OCI-LY7 (cell line): ENCODE measurements at regions of chr2 and their contacts with region 1.

Region 1: DNA sequence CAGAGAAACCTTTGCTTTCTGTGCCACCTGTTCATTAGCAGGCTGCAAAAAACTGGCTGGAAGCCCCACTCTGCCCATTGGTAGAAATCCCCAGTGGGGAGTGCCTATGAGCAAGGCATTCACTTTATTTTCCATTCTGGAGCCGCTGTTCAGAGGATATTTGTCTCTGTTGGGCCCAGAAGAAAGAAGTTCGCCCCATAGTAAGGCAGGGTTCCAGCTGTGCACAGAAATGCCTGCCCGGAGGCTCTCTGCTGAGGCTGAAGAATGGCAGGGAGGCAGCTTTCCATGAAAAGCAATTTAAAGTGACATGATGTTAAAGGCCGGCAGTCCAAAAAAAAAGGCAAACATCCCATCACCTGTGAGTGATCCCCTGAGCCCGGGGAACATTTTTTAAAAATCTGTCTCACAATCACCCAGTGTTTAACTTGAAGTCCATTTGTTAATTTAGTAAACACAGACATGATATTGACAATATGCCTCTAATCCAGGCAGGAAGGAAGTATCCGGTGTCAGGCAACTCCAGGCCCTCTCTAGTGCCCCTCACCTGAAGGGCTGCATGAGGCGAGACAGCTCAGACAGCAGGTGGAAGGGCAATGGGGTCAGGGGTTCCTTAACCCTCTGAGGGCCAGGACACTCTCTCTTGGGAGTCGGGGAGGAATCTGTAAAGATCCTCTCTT is 265.1 kb upstream of the SIX2 start:
- DNase-seq: no peak
- H3K4me3 ChIP-seq: no peak overlapping the region
- H3K27ac ChIP-seq: no peak overlapping the region
- H3K4me1 ChIP-seq: peaks cover 4% of the 10 kb centered on the region
- CTCF ChIP-seq: no peak

Region 2: GRCh38 chr2:44456946-44457345 is 817.4 kb before region 1 on chr2:
- CTCF ChIA-PET with region 1: no interaction called
- POLR2A ChIA-PET with region 1: no interaction called
- intact Hi-C with region 1: no loop called
- DNase-seq: no peak
- H3K4me3 ChIP-seq: no peak overlapping the region
- H3K27ac ChIP-seq: no peak overlapping the region
- H3K4me1 ChIP-seq: no peaks in the 10 kb centered on the region
- CTCF ChIP-seq: no peak

Region 3: DNA sequence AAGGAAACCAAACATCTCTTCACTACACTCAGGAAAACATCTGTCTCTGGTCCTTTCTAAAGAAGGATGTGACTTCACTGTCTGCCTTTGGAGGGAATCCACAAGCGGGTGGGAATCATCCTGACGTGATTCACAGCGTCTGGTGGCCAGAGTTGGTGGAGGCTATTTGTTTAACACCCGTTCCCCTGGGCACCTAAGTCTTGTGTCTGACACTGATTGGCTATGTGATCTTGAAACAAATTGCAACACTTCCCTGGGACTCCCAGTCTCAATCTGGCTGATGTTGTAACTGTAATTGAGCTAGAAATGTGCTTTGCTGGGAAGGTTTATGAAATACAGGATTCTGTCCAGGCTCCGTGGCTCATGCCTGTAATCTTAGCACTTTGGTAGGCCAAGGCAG is 361.7 kb before region 1 on chr2:
- CTCF ChIA-PET with region 1: no interaction called
- POLR2A ChIA-PET with region 1: no interaction called
- intact Hi-C with region 1: no loop called
- DNase-seq: no peak
- H3K4me3 ChIP-seq: no peak overlapping the region
- H3K27ac ChIP-seq: no peak overlapping the region
- H3K4me1 ChIP-seq: no peaks in the 10 kb centered on the region
- CTCF ChIP-seq: no peak

Region 4: DNA sequence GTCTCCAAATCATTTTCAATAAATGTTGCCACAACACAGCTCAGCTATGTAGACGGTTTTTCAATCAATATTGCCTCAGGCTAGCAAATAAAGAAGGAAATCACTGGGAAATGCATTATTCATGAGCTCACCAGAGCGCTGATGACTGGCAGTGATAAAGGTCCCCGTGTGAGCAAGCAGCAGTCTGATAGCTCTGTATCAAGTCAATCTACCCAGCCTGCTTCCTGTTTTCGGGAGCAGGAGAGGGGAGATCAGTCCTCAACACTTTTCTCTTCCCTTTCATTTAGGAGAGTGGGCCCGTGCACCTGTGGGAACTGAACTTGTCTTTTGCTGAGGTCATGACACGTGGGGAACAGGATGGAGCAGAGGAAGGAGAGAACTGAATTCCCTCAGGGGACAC is 11.2 kb before region 1 on chr2:
- CTCF ChIA-PET with region 1: no interaction called
- POLR2A ChIA-PET with region 1: interaction called, 10 read pairs
- intact Hi-C with region 1: no loop called
- DNase-seq: peak; percentile 55
- H3K4me3 ChIP-seq: no peak overlapping the region
- H3K27ac ChIP-seq: no peak overlapping the region
- H3K4me1 ChIP-seq: peaks cover 40% of the 10 kb centered on the region
- CTCF ChIP-seq: no peak